Mucosa of descending colon (tissue), 3 donors: ENCODE measurements at regions of chr17 and their contacts with region 1.

Region 1: DNA sequence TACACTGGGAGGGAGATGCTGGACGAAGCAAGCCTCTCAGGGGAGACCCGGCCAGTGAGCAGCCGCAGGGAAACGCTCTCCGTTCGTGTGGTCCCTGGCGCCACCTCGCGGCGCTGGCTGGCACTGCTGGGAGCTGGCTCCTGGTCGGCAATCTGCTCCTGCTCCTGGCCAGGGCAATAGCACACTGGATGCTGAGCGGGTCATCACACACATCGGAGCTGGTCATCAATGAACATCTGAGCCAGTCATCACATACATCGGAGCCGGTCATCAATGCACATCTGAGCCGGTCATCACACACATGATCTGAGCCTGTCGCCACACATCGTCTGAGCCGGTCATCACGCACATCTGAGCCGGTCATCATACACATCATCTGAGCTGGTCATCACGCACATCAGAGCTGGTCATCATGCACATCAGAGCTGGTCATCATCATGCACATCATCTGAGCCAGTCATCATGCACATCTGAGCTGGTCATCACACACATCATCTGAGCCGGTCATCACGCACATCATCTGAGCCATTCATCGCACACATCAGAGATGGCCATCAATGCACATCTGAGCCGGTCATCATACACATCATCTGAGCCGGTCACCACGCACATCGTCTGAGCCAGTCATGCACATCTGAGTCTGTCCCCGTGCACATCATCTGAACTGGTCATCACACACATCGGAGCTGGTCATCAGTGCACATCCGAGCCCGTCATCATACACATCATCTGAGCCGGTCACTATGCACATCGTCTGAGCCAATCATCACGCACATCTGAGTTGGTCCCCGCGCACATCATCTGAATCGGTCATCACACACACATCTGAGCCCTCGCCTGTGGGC is 217.3 kb downstream of the RBFOX3 start:
- DNase-seq: peak; percentile 70 to 92 (median 87)
- ATAC-seq: peak; percentile 85
- H3K4me3 ChIP-seq: no peak overlapping the region
- H3K4me1 ChIP-seq: no peaks in the 10 kb centered on the region
- CTCF ChIP-seq: peak; percentile 72

Region 2: DNA sequence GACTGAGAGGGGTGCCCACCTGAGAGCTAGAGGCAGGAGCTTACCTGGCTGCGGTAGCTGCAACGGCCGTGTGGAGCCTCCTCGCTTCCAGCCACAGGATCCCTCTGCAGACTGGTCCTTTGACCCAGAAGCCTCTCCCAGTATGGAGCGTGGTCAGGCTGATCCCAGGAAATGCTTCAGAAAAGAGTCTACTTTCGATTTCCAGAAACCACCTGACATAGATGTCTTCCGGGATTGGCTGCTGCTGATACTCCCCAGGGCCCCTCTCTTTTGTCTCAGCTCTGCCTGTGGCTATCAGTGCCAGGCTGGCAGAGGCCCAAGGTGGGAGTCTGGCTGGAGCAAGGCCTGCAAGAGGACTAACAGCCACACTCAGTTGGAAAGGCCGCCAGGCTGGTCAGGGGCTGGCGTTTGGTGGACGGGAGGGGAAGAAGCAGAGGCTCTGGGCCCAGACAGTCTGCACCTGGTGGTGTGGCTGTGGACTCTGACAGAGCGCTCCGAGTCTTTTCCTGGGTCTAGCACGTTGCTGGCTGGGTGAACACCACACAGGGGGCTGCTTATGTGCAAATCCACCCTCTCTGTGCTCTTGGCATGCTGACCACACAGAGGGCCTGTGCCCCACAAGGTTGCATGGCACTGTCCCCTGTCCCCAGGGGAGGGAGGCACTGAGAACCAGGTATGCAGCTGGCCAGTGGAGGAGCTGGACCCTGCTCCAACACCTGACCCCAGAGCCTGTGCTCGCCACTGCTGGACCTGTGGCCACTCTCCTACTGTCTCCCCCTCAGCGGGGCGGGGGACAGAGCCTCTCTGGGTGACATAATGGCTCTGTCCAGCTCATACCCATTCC is 413.6 kb before region 1 on chr17 and contains the start of gene LGALS3BP:
- intact Hi-C with region 1: no loop called
- DNase-seq: peak; percentile 84 to 87 (median 85)
- ATAC-seq: peak; percentile 85
- H3K4me3 ChIP-seq: peak within 1 kb of the TSS; percentile 14
- H3K4me1 ChIP-seq: peaks cover 36% of the 10 kb centered on the region
- CTCF ChIP-seq: no peak
- total RNA-seq, gene LGALS3BP: 329 to 838 (median 752) TPM

Region 3: DNA sequence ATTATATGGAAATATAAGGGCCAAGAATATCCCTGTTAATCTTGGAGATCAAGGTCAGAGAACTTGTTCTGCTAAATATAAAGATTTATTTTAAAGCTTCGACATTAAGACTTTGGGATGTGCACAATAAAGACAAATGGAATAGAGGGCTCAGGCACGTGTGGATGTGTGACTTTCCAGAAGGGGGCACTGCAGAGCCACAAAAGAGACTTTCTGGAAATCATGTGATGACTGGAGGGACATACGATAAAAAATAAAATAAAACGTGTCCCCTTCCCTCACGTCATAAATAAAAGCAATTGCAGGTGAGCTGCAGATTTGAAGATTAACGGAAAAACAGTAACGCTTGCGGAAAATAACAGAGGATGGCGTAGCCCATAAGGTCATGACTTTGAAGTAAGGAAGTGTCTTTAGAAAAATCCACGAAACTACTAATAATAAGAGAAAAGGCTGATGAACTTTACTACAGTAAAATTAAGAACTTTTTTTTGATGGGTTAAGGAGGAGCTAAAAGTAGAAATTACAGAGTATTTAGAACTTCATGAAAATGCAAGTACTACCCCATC is 328.4 kb before region 1 on chr17:
- intact Hi-C with region 1: loop called in 1 of 2 experiments (anchors 10 kb)
- DNase-seq: peak in 2 of 3 donors; percentile 62 to 86
- ATAC-seq: peak; percentile 81
- H3K4me3 ChIP-seq: no peak overlapping the region
- H3K4me1 ChIP-seq: no peaks in the 10 kb centered on the region
- CTCF ChIP-seq: peak; percentile 51

Region 4: GRCh38 chr17:79087428-79088143 is 306.0 kb before region 1 on chr17:
- intact Hi-C with region 1: loop called in 1 of 2 experiments (anchors 10 kb)
- DNase-seq: peak in 2 of 3 donors; percentile 86
- ATAC-seq: peak; percentile 79
- H3K4me3 ChIP-seq: no peak overlapping the region
- H3K4me1 ChIP-seq: no peaks in the 10 kb centered on the region
- CTCF ChIP-seq: peak; percentile 84

Region 5: GRCh38 chr17:79500745-79501618 is 107.4 kb after region 1 on chr17:
- intact Hi-C with region 1: no loop called
- DNase-seq: no peak
- ATAC-seq: no peak
- H3K4me3 ChIP-seq: no peak overlapping the region
- H3K4me1 ChIP-seq: peaks cover 4% of the 10 kb centered on the region
- CTCF ChIP-seq: no peak